ENCODE measurements at regions of chr7 and their contacts with region 1.

Region 1: GRCh38 chr7:519484-520390 is at the start of gene PDGFA:
- DNase-seq: peak; percentile 63 to 87 (median 80)
- ATAC-seq: peak; percentile 24 to 51 (median 36)
- H3K4me3 ChIP-seq: peak within 1 kb of the TSS; percentile 71 to 100 (median 88)
- H3K27ac ChIP-seq: peak within 1 kb of the TSS; percentile 83 to 94 (median 92)
- H3K4me1 ChIP-seq: peaks cover 0 to 15% (median 14%) of the 10 kb centered on the region in 3 donors
- H3K27me3 ChIP-seq: no peaks in the 10 kb centered on the region
- CTCF ChIP-seq: peak in 3 of 4 donors; percentile 17 to 31 (median 21)
- total RNA-seq, gene PDGFA: 54.1 to 175 (median 81.5) TPM

Region 2: DNA sequence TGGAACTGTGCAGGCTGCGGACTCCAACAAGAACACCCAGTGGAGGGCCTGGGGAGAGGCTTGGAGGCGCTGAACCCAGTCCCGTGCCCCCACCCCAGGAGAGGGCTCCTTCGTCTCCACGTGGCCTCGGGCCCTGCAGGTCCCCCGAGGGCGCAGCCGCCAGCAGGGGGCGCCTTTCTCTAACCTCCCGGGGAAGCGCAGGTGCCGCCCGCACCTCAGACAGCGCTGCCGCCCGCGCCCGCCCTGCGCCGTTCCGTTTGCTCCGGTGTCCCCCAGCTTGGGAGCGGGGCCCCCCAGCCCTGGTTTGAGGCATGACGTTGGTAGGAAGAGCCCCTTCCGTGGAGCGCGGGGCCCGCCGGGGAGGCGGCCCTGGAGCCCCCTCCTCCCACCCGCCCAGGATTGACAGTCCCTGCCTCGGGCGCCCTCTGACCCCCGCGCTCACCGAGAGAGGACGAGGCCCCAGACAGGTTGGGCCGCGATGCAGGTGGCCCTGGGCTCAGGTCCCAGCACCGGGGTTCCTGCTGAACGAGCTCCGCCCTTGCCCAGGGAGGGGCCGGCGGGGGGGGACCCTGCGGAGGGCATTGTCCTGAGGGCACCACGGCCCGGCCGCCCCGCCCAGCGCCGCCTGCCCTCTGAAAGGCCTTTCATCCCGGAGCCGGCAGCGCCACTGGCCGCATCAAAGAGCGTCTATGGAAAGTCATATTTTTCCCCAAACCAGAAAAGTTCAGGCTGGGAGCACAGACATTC is 186.9 kb before region 1 on chr7:
- intact Hi-C with region 1: loop called in 1 of 3 experiments (anchors 5 kb)
- DNase-seq: peak; percentile 87 to 100 (median 94)
- ATAC-seq: peak; percentile 83 to 95 (median 90)
- H3K4me3 ChIP-seq: peak overlapping the region in 3 of 4 donors; percentile 3 to 45 (median 33)
- H3K27ac ChIP-seq: peak overlapping the region; percentile 80 to 89 (median 80)
- H3K4me1 ChIP-seq: peaks cover 13 to 17% (median 17%) of the 10 kb centered on the region in 3 donors
- H3K27me3 ChIP-seq: no peaks in the 10 kb centered on the region
- CTCF ChIP-seq: peak; percentile 90 to 94 (median 92)

Region 3: GRCh38 chr7:636396-636795 is 116.7 kb after region 1 on chr7:
- intact Hi-C with region 1: no loop called
- DNase-seq: peak in 5 of 6 donors; percentile 20 to 80 (median 57)
- ATAC-seq: peak; percentile 43 to 90 (median 75)
- H3K4me3 ChIP-seq: no peak overlapping the region
- H3K27ac ChIP-seq: no peak overlapping the region
- H3K4me1 ChIP-seq: no peaks in the 10 kb centered on the region
- H3K27me3 ChIP-seq: no peaks in the 10 kb centered on the region
- CTCF ChIP-seq: peak in 3 of 4 donors; percentile 10 to 31 (median 19)

Region 4: DNA sequence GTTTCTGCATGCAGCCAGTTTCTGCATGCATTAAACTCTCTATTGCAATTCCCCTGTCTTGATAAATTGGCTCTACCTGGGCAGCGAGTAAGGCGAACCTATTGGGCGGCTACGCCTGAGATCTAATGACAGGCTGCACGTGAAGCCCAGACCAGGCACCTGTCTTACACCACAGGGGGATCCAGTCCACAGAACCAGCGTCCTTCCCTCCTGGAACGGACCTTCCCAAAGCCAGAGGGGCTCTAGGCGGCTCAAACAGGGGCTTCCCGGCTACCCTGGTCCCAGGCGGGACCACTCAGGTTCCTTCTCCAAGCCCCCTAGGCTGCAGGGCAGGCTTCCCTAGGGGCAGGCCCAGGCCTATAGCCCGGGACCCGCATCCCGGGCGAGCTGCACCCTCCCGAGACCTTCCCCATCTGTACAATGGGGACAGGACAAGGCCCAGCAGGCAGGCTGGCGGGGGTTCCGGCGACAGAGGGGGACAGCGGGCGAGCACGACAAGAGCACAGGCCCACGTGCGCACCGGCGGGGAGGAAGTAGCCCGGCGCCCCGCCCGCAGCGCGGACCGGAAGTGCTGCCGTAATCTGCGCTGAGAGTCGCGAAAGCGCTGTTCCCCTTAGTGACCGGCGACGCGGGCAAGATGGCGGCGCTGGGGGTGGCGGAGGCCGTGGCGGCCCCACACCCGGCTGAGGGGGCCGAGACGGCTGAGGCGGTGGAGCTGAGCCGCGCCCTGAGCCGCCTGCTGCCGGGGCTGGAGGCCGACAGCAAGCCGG is 206.5 kb after region 1 on chr7 and contains the start of gene DNAAF5:
- intact Hi-C with region 1: loop called in 1 of 3 experiments (anchors 10 kb)
- DNase-seq: peak; percentile 80 to 94 (median 85)
- ATAC-seq: peak; percentile 97 to 99 (median 98)
- H3K4me3 ChIP-seq: peak within 1 kb of the TSS; percentile 80 to 91 (median 90)
- H3K27ac ChIP-seq: peak within 1 kb of the TSS; percentile 29 to 51 (median 35)
- H3K4me1 ChIP-seq: peaks cover 0 to 14% (median 3%) of the 10 kb centered on the region in 3 donors
- H3K27me3 ChIP-seq: no peaks in the 10 kb centered on the region
- CTCF ChIP-seq: no peak
- total RNA-seq, gene DNAAF5: 9.0 to 16.6 (median 12.6) TPM